CD4-positive, alpha-beta T cell (primary cell): ENCODE measurements at regions of chr18 and their contacts with region 1.

Region 1: DNA sequence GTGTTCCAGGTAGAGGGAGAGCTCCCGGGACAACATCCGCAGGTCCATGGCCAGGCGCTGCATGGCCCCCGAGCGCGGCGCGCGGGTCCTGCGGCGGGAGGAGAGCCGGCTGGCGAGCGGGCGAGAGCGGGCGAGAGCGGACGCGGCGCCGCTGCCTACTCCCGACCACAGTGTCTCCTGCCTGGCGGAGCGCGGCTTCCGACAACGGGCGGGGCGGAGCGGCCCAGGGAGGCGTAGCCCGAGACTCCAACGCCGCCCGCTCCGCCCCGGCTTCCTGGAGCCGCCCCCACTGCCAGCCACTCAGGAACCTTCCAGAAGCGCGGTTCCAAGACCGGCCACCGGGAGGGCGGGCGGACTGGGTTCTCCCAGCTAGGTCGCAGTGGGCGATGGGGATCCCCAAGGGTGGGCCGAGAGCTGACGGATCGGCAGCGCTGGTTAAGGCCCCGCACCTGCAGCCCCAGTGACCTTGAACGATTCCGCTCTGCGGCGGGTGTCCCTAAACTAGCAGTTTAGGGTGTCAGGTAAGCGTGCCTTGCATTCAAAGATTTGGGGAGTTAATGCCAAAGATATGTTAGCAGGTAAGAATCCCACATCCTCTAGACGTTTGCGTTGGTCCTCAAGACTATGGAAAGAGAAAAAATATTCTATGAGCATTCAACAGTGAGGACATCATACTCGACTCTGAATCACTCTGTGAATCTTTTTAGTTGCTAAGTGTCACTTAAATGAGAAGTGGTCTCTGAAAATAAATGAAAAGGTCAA is at the start of gene ABHD3:
- DNase-seq: peak; percentile 83 to 97 (median 90)
- ATAC-seq: peak; percentile 93
- H3K4me3 ChIP-seq: peak within 1 kb of the TSS; percentile 93
- H3K4me3 Mint-ChIP-seq: peak within 1 kb of the TSS; percentile 97
- H3K27ac ChIP-seq: peak within 1 kb of the TSS; percentile 67 to 83
- H3K27ac Mint-ChIP-seq: peak within 1 kb of the TSS; percentile 96
- H3K4me1 ChIP-seq: peaks cover 10% of the 10 kb centered on the region
- H3K4me1 Mint-ChIP-seq: peaks cover 34% of the 10 kb centered on the region
- H3K27me3 ChIP-seq: no peaks in the 10 kb centered on the region
- H3K27me3 Mint-ChIP-seq: no peaks in the 10 kb centered on the region
- CTCF ChIP-seq: peak; percentile 48
- total RNA-seq, gene ABHD3: 24.1 to 25.4 TPM

Region 2: DNA sequence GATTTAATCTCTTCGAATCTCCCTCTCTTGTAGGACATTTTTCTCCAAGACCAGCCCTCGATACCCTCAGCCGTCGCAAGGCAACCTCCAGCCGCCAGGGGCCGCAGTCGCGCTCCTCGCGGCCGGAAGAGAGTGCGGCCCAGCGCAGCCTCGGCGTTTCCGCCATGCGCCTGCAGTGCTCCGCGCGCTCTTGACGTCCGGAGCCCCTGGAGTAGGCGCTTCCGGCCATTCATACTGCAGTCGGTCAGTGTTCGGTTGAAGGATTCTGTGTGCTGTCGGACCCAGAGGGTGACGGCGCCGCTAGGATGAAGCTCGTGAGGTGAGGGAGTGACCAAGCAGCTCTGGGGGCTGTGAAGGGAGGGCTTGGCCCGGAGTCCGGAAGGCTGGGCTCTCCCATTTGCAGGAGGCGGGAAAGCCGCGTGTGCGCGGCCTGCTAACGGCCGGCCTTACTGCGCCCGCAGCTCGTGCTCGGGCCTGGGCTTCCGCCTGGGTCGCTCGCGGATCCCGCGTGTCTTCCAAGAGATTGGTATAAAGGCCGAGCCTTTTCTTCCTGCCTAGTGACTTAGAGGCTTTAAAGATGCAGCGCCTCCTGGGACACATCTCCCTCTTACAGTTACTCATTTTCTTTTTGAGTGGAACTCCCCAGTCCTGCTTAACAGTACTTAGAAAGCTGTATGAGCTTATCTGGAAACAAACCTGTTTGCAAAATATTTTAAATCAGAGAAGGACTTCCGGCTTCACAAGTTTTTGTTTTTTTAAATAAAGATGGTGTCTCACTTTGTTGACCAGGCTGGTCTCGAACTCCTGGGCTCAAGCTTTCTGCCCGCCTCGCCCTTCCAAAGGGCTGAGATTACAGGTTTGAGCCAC is 92.4 kb before region 1 on chr18 and contains the start of gene SNRPD1:
- CTCF ChIA-PET with region 1: interaction called, 6 read pairs
- POLR2A ChIA-PET with region 1: interaction called, 13 read pairs
- intact Hi-C with region 1: loop called (anchors 1 to 5 kb)
- DNase-seq: peak; percentile 73 to 94 (median 86)
- ATAC-seq: peak; percentile 99
- H3K4me3 ChIP-seq: peak within 1 kb of the TSS; percentile 85
- H3K4me3 Mint-ChIP-seq: peak within 1 kb of the TSS; percentile 100
- H3K27ac ChIP-seq: peak within 1 kb of the TSS; percentile 86 to 90
- H3K27ac Mint-ChIP-seq: peak within 1 kb of the TSS; percentile 94
- H3K4me1 ChIP-seq: peaks cover 26% of the 10 kb centered on the region
- H3K4me1 Mint-ChIP-seq: peaks cover 44% of the 10 kb centered on the region
- H3K27me3 ChIP-seq: no peaks in the 10 kb centered on the region
- H3K27me3 Mint-ChIP-seq: no peaks in the 10 kb centered on the region
- CTCF ChIP-seq: peak; percentile 86
- total RNA-seq, gene SNRPD1: 35.7 to 38.9 TPM

Region 3: DNA sequence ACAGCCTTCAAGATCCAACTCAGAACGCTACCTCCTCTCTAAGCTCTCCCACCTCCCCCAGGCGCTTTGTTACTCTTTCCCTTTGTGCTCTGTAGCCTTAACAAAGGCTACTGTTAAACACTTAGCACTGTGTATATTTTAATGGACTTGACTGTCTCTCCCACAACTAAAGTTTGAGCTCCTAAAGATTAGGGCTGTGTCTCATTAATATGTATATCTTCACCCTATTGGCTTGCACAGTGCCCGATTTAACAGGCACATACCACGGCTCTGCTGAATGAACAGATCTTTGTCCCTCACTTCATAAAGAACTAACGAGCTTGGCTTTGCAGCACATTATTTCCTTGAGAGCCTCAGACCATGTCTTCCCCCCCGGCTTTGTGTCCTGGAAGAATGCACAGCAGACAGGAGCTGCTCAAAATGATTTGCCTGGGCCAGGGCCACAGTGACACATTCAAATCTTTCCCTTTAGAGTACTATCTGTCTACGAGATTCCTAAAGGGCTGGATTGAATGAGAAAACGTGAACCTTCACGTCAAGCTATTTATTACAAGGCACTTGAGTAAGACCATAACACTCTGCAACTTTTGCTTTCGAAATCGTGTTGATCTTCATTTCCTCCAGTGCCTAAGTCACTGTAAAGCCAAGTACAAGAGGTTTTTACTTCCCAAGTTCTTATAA is 22.3 kb before region 1 on chr18:
- CTCF ChIA-PET with region 1: interaction called, 6 read pairs
- POLR2A ChIA-PET with region 1: interaction called, 47 read pairs
- intact Hi-C with region 1: loop called (anchors 2 kb)
- DNase-seq: peak in 8 of 14 experiments; percentile 2 to 73 (median 28)
- ATAC-seq: peak; percentile 87
- H3K4me3 ChIP-seq: peak overlapping the region; percentile 57
- H3K4me3 Mint-ChIP-seq: no peak overlapping the region
- H3K27ac ChIP-seq: peak overlapping the region; percentile 47 to 87
- H3K27ac Mint-ChIP-seq: no peak overlapping the region
- H3K4me1 ChIP-seq: peaks cover 14% of the 10 kb centered on the region
- H3K4me1 Mint-ChIP-seq: peaks cover 28% of the 10 kb centered on the region
- H3K27me3 ChIP-seq: no peaks in the 10 kb centered on the region
- H3K27me3 Mint-ChIP-seq: no peaks in the 10 kb centered on the region
- CTCF ChIP-seq: no peak

Region 4: GRCh38 chr18:21740724-21741510 is 36.1 kb after region 1 on chr18 and contains the start of gene MIB1:
- CTCF ChIA-PET with region 1: interaction called, 20 read pairs
- POLR2A ChIA-PET with region 1: interaction called, 63 read pairs
- intact Hi-C with region 1: loop called (anchors 1 kb)
- DNase-seq: peak in 11 of 14 experiments; percentile 25 to 99 (median 76)
- ATAC-seq: peak; percentile 57
- H3K4me3 ChIP-seq: peak within 1 kb of the TSS; percentile 94
- H3K4me3 Mint-ChIP-seq: peak within 1 kb of the TSS; percentile 98
- H3K27ac ChIP-seq: peak within 1 kb of the TSS; percentile 87 to 95
- H3K27ac Mint-ChIP-seq: peak within 1 kb of the TSS; percentile 93
- H3K4me1 ChIP-seq: peaks cover 34% of the 10 kb centered on the region
- H3K4me1 Mint-ChIP-seq: peaks cover 44% of the 10 kb centered on the region
- H3K27me3 ChIP-seq: no peaks in the 10 kb centered on the region
- H3K27me3 Mint-ChIP-seq: no peaks in the 10 kb centered on the region
- CTCF ChIP-seq: no peak
- total RNA-seq, gene MIB1: 13.6 to 15.3 TPM

Region 5: DNA sequence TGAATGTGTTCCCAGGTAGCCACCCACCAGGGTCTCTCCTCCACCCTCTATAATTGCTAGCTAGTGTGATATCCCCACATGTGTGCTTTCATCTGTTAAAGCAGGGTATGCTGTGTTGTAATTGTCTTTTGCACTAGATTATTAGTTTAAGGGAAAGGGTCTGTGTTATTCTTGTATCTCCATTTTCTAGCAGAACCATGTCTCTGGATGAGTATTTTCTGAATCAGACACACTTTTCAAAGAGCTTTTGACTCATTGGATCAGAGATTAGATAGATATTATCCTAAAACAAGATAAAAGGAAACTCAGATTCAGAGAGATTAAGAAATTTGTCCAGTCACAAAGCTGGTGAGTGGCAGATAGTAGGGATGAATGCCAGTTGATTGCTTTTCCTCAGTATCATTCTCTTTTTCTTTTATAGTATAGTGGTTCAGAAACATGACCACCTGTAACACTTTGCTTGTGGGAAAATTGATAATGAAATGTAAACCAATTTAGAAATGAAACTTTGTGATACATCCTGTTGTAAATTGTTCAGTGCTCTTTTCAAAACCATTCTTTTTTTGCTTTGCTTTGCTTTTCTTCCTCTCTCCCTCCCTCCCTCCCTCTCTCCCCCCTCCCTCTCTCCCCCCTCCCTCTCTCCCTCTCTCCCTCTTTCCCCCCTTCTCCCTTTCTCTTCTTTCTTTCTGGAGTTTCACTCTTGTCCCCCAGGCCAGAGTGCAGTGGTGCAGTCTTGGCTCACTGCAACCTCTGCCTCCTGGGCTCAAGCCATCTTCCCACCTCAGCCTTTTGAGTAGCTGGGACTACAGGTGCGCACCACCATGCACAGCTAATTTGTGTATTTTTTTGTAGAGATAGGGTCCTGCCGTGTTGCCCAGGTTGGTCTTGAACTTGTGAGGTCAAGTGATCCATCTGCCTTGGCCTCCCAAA is 43.2 kb after region 1 on chr18:
- CTCF ChIA-PET with region 1: interaction called, 11 read pairs
- POLR2A ChIA-PET with region 1: interaction called, 12 read pairs
- intact Hi-C with region 1: no loop called
- DNase-seq: peak in 1 of 14 experiments; percentile 18
- ATAC-seq: no peak
- H3K4me3 ChIP-seq: no peak overlapping the region
- H3K4me3 Mint-ChIP-seq: peak overlapping the region; percentile 64
- H3K27ac ChIP-seq: no peak overlapping the region
- H3K27ac Mint-ChIP-seq: peak overlapping the region; percentile 31
- H3K4me1 ChIP-seq: peaks cover 13% of the 10 kb centered on the region
- H3K4me1 Mint-ChIP-seq: peaks cover 53% of the 10 kb centered on the region
- H3K27me3 ChIP-seq: no peaks in the 10 kb centered on the region
- H3K27me3 Mint-ChIP-seq: no peaks in the 10 kb centered on the region
- CTCF ChIP-seq: no peak

Region 6: GRCh38 chr18:21803495-21803894 is 98.7 kb after region 1 on chr18:
- CTCF ChIA-PET with region 1: no interaction called
- POLR2A ChIA-PET with region 1: no interaction called
- intact Hi-C with region 1: loop called in 1 of 2 experiments (anchors 10 kb)
- DNase-seq: no peak
- ATAC-seq: no peak
- H3K4me3 ChIP-seq: no peak overlapping the region
- H3K4me3 Mint-ChIP-seq: no peak overlapping the region
- H3K27ac ChIP-seq: no peak overlapping the region
- H3K27ac Mint-ChIP-seq: no peak overlapping the region
- H3K4me1 ChIP-seq: no peaks in the 10 kb centered on the region
- H3K4me1 Mint-ChIP-seq: no peaks in the 10 kb centered on the region
- H3K27me3 ChIP-seq: no peaks in the 10 kb centered on the region
- H3K27me3 Mint-ChIP-seq: no peaks in the 10 kb centered on the region
- CTCF ChIP-seq: no peak